ENCODE measurements at regions of chr4 and their contacts with region 1.

Region 1: GRCh38 chr4:40056716-40057585 is at the start of gene N4BP2:
- DNase-seq: peak; percentile 92
- H3K4me3 Mint-ChIP-seq: peak within 1 kb of the TSS; percentile 91
- H3K27ac Mint-ChIP-seq: peak within 1 kb of the TSS; percentile 99
- H3K4me1 Mint-ChIP-seq: peaks cover 30% of the 10 kb centered on the region
- H3K27me3 Mint-ChIP-seq: peaks cover 3% of the 10 kb centered on the region
- total RNA-seq, gene N4BP2: 24.5 and 24.7 TPM in 2 replicates

Region 2: DNA sequence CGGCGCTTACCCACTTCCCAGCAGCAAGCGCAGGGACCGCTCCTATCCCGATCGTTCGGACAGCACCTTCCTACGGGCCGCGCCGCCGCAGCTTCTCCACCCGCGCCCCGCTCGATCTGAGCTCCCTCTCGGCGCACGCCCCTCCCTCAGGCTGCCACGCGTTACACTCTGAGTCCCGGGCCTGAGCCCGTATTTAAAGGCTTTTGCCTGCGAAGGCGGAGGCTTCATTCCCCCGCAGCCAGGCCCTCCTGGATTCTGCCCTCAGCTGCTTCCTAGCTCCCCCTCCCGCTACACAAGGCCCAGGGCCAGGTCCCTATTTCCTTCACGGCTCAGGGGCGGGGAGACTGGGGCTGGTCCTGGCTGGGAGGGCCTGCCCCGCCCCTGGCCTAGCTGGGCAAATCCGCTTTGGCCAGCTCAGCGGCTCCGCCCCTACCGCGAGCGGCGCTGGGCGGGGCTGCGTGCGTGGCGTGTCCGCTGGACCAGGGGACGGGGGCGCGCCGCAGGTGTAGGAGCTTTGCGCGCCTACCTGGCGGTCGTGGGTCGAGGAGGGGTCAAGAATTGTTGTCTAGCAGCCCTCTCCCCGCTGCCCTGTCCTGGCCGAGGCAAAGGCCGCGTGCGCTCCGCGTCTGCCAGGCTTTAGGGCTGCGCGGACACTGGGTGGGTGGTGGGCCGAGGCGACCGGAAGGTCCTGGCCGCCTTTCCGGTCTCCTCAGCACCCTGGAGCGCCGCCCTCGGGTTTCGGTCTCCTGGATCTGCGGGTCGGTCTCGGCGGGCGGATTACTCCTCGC is 529.5 kb before region 1 on chr4 and contains the start of gene UGDH:
- intact Hi-C with region 1: loop called (anchors 5 kb)
- DNase-seq: peak; percentile 99
- H3K4me3 Mint-ChIP-seq: peak within 1 kb of the TSS; percentile 98
- H3K27ac Mint-ChIP-seq: peak within 1 kb of the TSS; percentile 95
- H3K4me1 Mint-ChIP-seq: peaks cover 20% of the 10 kb centered on the region
- H3K27me3 Mint-ChIP-seq: no peaks in the 10 kb centered on the region
- total RNA-seq, gene UGDH: 23.1 and 29.2 TPM in 2 replicates

Region 3: GRCh38 chr4:39977489-39978377 is 79.2 kb before region 1 on chr4 and contains the start of gene PDS5A:
- intact Hi-C with region 1: loop called (anchors 1 kb)
- DNase-seq: peak; percentile 98
- H3K4me3 Mint-ChIP-seq: peak within 1 kb of the TSS; percentile 95
- H3K27ac Mint-ChIP-seq: peak within 1 kb of the TSS; percentile 91
- H3K4me1 Mint-ChIP-seq: peaks cover 27% of the 10 kb centered on the region
- H3K27me3 Mint-ChIP-seq: no peaks in the 10 kb centered on the region
- total RNA-seq, gene PDS5A: 126 and 128 TPM in 2 replicates

Region 4: DNA sequence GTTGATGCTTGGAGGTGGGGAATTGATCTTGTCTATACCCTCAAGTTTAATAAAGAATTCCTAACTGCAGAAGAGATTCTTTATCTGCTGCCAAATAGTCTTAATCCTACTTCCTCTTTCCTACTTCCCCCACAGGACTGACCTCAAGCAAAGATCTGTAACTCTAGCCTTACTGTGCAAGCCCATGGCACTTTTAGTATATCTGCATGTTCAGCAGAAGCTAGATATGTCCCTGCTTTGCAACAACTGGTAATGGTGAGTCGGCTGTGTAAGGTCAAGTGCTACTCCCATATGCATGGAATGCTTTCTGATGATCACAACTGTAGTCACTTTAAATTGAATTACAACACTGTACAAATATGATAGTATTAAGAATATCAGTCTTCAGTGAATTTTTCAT is 53.0 kb before region 1 on chr4:
- intact Hi-C with region 1: no loop called
- DNase-seq: no peak
- H3K4me3 Mint-ChIP-seq: no peak overlapping the region
- H3K27ac Mint-ChIP-seq: no peak overlapping the region
- H3K4me1 Mint-ChIP-seq: no peaks in the 10 kb centered on the region
- H3K27me3 Mint-ChIP-seq: no peaks in the 10 kb centered on the region

Region 5: DNA sequence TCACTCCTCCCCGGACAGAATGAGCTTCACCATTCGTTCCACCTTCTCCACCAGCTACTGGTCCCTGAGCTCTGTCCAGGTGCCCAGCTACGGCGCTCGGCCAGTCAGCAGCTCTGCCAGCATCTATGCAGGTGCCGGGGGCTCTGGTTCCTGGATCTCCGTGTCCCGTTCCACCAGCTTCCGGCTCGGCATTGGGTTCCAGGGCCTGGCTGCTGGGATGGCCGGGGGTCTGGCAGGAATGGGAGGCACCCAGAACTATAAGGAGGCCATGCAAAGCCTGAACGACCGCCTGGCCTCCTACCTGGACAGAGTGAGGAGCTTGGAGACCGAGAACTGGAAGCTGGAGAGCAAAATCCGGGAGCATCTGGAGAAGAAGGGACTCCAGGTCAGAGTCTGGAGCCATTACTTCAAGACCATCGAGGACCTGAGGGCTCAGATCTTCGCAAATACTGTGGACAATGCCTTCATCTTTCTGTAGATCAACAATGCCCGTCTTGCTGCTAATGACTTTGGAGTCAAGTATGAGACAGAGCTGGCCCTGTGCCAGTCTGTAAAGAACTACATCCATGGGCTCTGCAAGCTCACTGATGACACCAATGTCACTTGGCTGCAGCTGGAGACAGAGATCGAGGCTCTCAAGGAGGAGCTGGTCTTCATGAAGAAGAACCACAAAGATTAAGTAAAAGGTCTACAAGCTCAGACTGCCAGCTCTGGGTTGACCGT is 36.6 kb before region 1 on chr4:
- intact Hi-C with region 1: no loop called
- DNase-seq: no peak
- H3K4me3 Mint-ChIP-seq: no peak overlapping the region
- H3K27ac Mint-ChIP-seq: no peak overlapping the region
- H3K4me1 Mint-ChIP-seq: no peaks in the 10 kb centered on the region
- H3K27me3 Mint-ChIP-seq: peaks cover 2% of the 10 kb centered on the region

Region 6: DNA sequence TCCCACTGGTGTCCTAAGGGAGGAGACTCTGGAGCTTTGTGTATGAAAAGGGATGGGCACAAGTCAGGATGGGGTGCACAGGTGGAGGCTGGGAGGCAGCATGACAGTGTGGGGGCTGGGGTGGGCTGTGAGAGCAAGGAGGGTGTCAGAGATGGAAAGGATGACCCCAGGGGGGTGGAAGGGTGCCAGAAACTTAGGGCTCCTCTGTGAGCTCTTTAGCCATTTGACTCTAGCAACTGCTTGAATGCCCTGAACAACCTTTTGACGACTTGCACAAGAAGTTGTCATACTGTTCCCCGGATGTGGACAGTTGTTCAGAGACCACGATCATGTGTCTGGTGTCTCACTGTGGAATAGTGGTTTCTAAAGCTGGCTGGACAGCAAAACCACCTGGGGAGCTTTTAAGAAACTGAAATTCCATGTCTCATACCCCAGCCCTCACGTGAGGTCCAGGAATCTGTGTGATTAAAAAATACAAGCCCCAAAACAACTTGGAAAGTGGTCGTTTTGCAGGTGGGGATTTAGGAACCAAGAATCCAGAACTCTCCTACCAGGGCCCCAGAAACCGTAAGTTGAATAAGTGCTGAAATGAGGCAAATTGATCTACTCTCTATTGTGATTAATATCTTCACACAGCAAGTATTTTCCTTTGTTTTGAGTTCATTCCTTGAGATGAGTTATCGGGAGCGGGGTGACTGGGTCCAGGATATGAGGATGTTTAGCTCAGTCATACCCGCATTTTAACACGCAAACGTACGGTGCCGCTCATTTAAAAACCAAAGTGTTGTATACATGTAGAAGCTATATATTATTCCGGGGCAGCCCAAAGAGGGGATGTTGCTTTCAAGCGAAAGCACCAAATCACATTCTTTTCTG is 143.3 kb after region 1 on chr4:
- intact Hi-C with region 1: loop called (anchors 1 kb)
- DNase-seq: peak; percentile 93
- H3K4me3 Mint-ChIP-seq: peak overlapping the region; percentile 93
- H3K27ac Mint-ChIP-seq: peak overlapping the region; percentile 94
- H3K4me1 Mint-ChIP-seq: peaks cover 44% of the 10 kb centered on the region
- H3K27me3 Mint-ChIP-seq: no peaks in the 10 kb centered on the region

Region 7: DNA sequence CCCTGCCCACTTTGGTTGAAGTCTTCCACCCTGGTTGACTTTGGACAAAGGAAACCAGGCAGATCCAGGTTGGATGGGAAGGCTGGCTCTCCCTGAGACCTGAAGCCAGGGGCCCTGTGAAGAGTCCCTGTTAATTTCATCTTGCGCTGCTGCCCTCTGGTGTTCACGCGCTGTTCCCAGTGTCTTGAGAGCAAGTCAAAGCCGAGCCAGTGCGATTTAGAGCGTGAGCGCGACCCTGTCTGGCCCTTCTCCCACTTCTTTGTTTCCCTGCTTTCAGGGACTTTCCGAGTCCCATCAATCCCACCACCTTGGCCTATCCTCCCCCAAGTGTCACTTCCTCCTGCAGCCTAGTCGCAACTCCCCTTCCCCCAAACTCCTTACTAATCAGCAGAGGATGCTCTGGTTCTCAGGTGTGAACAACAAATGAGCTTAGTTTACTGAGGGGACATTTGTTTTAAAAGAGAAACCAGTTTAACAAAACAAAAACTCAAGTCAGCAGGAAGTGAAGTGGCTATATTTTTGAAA is 252.4 kb after region 1 on chr4:
- intact Hi-C with region 1: loop called (anchors 1 kb)
- DNase-seq: peak; percentile 96
- H3K4me3 Mint-ChIP-seq: peak overlapping the region; percentile 73
- H3K27ac Mint-ChIP-seq: peak overlapping the region; percentile 98
- H3K4me1 Mint-ChIP-seq: peaks cover 81% of the 10 kb centered on the region
- H3K27me3 Mint-ChIP-seq: no peaks in the 10 kb centered on the region

Measured in activated CD4-positive, alpha-beta T cell treated with anti-CD3 and anti-CD28 coated beads, Interleukin-2, amount 10 ng/mL, durations not matched to agents 24 days and 14 days (primary cell).